GM12878 (cell line): ENCODE measurements at regions of chr17 and their contacts with region 1.

Region 1: DNA sequence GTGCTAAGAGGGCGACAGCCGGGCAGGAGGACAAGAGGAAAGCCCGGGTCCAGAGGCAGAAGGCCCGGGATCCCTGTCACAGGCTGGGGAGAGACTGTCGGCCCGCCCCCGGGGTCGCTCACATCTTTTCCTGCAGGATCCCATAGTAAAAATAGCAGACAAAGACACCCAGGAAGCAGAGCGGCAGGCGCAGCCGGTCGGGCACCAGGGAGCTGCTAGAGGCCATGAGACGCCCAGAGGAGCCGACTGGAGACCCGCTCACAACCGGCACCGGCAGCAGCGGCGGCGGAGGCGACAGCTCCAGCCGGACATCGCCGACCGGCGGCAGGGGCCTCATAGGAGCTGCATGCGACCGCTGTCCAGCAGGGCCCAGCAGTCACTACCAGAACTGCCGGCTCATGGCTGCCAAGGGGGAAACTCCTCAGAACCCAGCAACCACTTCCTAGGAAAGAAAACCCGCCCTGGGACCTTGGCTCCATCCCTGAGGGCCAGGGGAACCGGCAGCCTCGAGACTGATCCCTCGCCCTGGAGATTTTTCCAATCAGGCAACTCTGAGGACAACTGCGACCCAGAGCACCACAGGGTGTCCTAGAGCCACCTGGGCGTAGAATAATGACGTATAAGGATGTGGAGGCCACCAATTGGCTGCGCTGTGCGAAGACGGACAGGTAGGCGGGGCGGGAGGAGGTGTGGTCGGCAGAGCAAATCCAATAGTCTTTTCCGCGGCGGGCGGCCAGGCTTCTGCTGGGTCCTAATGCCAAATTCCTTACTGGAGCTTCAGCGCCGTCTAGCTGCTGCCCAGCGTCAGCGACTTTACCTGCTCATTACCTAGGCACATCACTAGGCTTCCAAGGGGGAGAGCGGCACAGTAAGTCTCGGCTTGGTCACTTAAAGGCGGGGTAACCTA is at the start of gene SLC35B1:
- DNase-seq: peak; percentile 97
- ATAC-seq: peak; percentile 98
- H3K4me3 ChIP-seq: peak within 1 kb of the TSS; percentile 91
- H3K27ac ChIP-seq: peak within 1 kb of the TSS; percentile 98
- H3K4me1 ChIP-seq: 0 out of 2 replicates have a peak, but pooled peaks cover 3% of the 10 kb centered on the region
- H3K27me3 ChIP-seq: no peaks in the 10 kb centered on the region
- CTCF ChIP-seq: peak; percentile 97 to 99 (median 98); a peak in 5 of 6 replicates
- EP300 ChIP-seq: 0 out of 4 replicates have a peak, but pooled peaks of 1 of the 2 experiments have one; percentile 10
- POLR2A ChIP-seq: peak; percentile 93
- RAD21 ChIP-seq: peak; percentile 70
- polyA plus RNA-seq, gene SLC35B1: 40.0 to 44.4 TPM

Region 2: DNA sequence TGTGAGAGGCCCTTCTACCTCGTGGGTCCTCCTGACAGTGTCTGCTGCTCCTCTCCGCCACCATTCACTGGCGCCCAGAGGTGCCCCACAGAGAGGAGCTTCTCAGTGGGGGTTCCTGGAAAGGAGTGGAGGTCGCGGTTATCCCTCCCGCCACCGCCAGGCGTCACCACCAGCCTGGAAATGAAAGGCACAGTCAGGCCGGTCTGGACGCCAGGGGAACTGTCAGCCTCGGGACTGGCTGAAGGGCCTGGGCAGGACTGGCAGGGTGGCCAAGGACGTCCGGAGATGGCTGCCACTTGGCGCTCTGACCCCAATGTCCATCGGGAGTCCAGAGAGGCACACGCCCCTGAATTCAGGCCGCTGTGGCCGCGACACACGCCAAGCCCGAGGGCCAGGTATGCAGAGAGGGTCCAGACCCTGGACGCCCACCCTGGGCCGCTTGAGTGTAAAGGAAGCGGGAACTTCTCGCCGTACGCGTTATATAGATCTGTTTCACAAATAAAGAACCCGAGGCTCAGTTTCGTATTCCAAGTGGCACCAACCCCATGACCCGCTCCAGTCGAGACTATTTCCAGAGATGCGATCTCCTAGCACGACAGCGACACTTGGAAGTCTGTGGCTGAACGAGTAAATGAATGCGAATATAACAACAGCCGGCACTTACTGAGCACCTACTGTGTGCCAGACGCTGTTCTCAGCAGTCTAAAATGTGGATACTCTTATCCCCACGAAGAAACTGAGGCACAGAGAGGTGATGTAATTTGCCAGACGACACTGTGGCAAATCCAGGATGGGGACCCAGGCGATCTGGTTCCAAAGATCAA is 139.8 kb before region 1 on chr17:
- CTCF ChIA-PET with region 1: interaction called, 483 read pairs
- POLR2A ChIA-PET with region 1: no interaction called
- RAD21 ChIA-PET with region 1: interaction called, 10 read pairs
- SMC1A ChIA-PET with region 1: interaction called, 7 read pairs
- in situ Hi-C with region 1: no loop called
- intact Hi-C with region 1: no loop called
- DNase-seq: no peak
- ATAC-seq: peak; percentile 80
- H3K4me3 ChIP-seq: no peak overlapping the region
- H3K27ac ChIP-seq: no peak overlapping the region
- H3K4me1 ChIP-seq: peaks cover 13% of the 10 kb centered on the region
- H3K27me3 ChIP-seq: peaks cover 0 to 2% of the 10 kb centered on the region in 2 experiments; a peak in 1 of 4 replicates
- CTCF ChIP-seq: peak; percentile 94 to 97 (median 96)
- EP300 ChIP-seq: no peak
- POLR2A ChIP-seq: no peak
- RAD21 ChIP-seq: peak; percentile 92

Region 3: GRCh38 chr17:49667854-49668253 is 40.0 kb before region 1 on chr17:
- CTCF ChIA-PET with region 1: no interaction called
- POLR2A ChIA-PET with region 1: no interaction called
- RAD21 ChIA-PET with region 1: no interaction called
- SMC1A ChIA-PET with region 1: no interaction called
- in situ Hi-C with region 1: no loop called
- intact Hi-C with region 1: no loop called
- DNase-seq: no peak
- ATAC-seq: no peak
- H3K4me3 ChIP-seq: no peak overlapping the region
- H3K27ac ChIP-seq: no peak overlapping the region
- H3K4me1 ChIP-seq: no peaks in the 10 kb centered on the region; the same call in 1 of the 2 replicates
- H3K27me3 ChIP-seq: no peaks in the 10 kb centered on the region
- CTCF ChIP-seq: no peak
- EP300 ChIP-seq: no peak
- POLR2A ChIP-seq: no peak
- RAD21 ChIP-seq: no peak

Region 4: DNA sequence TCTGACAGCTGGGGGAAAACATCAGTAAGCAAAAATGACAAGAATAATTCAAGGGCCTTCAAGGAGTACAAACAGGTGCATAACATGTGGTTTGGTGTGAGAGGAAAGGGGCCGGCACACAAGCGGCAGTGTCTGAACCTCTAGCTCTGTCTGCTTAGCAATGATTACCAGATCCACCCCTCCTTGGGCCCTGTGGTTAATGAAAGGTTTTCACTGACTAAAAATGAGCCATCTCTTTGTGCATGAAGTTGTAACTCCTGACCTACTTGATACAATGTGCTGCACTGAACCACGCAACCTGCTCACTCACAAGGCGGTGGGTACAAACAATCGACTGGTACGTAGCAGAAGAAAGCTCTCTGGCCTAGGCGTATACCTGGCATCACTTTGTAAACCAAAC is 40.9 kb after region 1 on chr17:
- CTCF ChIA-PET with region 1: interaction called, 46 read pairs
- POLR2A ChIA-PET with region 1: interaction called, 5 read pairs
- RAD21 ChIA-PET with region 1: interaction called, 26 read pairs
- SMC1A ChIA-PET with region 1: interaction called, 20 read pairs
- in situ Hi-C with region 1: no loop called
- intact Hi-C with region 1: no loop called
- DNase-seq: peak; percentile 97
- ATAC-seq: peak; percentile 91
- H3K4me3 ChIP-seq: no peak overlapping the region
- H3K27ac ChIP-seq: peak overlapping the region; percentile 92
- H3K4me1 ChIP-seq: peaks cover 57% of the 10 kb centered on the region
- H3K27me3 ChIP-seq: no peaks in the 10 kb centered on the region
- CTCF ChIP-seq: no peak
- EP300 ChIP-seq: peak; percentile 92 to 97
- POLR2A ChIP-seq: peak; percentile 52; the same call in 1 of the 2 replicates
- RAD21 ChIP-seq: no peak

Region 5: DNA sequence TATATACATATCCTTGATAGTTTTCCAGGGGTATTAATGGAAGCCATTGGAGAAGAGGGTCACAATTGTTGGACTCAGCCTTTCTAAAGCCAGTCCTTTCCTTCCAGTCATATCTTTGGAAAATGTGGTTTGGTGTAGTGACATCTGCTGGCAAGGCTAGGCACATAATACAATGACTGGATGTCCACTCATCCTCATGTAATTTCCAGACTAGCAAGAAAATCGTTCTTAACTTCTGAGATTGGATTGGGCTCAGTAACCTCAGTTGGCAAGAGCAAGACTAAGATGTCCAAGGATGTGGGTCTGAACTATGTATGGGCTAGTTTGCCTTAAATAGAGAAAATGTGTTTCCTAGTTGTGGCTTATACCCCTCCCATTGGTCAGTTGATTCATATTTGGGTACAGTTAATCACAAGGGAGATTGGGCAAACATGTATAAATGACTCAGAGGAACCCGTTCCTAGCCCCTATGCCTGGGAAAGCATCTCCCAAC is 71.9 kb after region 1 on chr17:
- CTCF ChIA-PET with region 1: interaction called, 67 read pairs
- POLR2A ChIA-PET with region 1: interaction called, 4 read pairs
- RAD21 ChIA-PET with region 1: interaction called, 11 read pairs
- SMC1A ChIA-PET with region 1: interaction called, 38 read pairs
- in situ Hi-C with region 1: no loop called
- intact Hi-C with region 1: no loop called
- DNase-seq: no peak
- ATAC-seq: peak; percentile 82
- H3K4me3 ChIP-seq: no peak overlapping the region
- H3K27ac ChIP-seq: no peak overlapping the region
- H3K4me1 ChIP-seq: no peaks in the 10 kb centered on the region
- H3K27me3 ChIP-seq: no peaks in the 10 kb centered on the region; a peak in 1 of 4 replicates
- CTCF ChIP-seq: peak; percentile 53 to 71 (median 56); a peak in 5 of 6 replicates
- EP300 ChIP-seq: no peak
- POLR2A ChIP-seq: no peak
- RAD21 ChIP-seq: peak; percentile 63; the same call in 1 of the 2 replicates

Region 6: DNA sequence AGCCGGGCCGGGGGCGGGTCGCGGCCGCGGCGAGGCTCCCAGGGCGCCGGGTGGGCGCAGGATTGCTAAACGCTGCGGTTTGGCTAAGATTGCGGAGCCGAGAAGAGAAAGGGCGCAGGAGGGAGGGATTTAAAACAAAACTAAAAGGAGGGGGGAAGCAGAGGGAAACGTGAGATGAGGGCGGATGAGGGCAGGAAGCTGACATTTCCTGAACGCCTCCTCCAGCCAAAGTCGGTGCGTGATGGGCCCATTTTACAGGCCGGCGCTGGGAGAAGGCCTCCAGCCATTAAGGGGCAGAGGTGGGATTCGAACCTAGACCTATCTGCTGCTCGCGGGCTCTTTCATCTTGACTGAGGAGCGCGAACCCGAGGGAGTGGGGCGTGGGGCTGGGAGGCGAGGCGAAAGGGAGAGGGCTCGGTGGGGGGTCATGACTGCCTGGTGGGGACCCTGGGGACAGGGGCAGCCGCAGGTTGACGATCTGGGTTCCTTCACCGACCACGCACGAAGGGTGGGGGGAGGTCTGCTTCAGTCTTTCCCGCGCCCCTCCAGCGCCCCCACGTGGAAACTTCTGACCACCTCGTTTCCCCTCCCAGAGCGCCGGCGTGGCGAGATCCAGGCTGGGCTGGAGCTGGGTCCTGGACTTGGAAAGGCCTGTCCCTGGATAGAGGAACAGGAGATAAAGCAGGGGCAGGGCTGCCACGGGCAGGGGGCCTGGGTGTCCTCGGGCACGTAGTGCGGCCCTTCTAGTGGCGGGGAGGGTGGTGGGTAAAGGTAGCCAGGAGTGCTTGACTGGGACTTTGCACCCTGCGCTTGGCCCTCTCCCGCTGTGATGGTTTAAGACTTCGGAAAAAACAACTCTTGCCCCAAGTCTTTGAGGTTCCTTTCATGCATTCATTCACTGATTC is 143.8 kb after region 1 on chr17:
- CTCF ChIA-PET with region 1: no interaction called
- POLR2A ChIA-PET with region 1: no interaction called
- RAD21 ChIA-PET with region 1: interaction called, 3 read pairs
- SMC1A ChIA-PET with region 1: no interaction called
- in situ Hi-C with region 1: no loop called
- intact Hi-C with region 1: loop called (anchors 5 kb)
- DNase-seq: no peak
- ATAC-seq: peak; percentile 78
- H3K4me3 ChIP-seq: peak overlapping the region; percentile 70
- H3K27ac ChIP-seq: no peak overlapping the region
- H3K4me1 ChIP-seq: no peaks in the 10 kb centered on the region
- H3K27me3 ChIP-seq: no peaks in the 10 kb centered on the region; a peak in 3 of 4 replicates
- CTCF ChIP-seq: peak; percentile 58 to 70 (median 65)
- EP300 ChIP-seq: no peak
- POLR2A ChIP-seq: no peak; the same call in 1 of the 2 replicates
- RAD21 ChIP-seq: peak; percentile 53